ENCODE measurements at regions of chr5 and their contacts with region 1.

Region 1: GRCh38 chr5:175873088-175873454 is 1.7 kb downstream of the CPLX2 start:
- DNase-seq: peak; percentile 50
- H3K4me3 Mint-ChIP-seq: no peak overlapping the region
- H3K27ac Mint-ChIP-seq: no peak overlapping the region
- H3K4me1 Mint-ChIP-seq: peaks cover 9% of the 10 kb centered on the region
- H3K27me3 Mint-ChIP-seq: peaks cover 46% of the 10 kb centered on the region

Region 2: GRCh38 chr5:175464074-175464941 is 408.8 kb before region 1 on chr5:
- CTCF ChIA-PET with region 1: no interaction called
- POLR2A ChIA-PET with region 1: no interaction called
- intact Hi-C with region 1: no loop called
- DNase-seq: peak; percentile 84
- H3K4me3 Mint-ChIP-seq: no peak overlapping the region
- H3K27ac Mint-ChIP-seq: no peak overlapping the region
- H3K4me1 Mint-ChIP-seq: peaks cover 14% of the 10 kb centered on the region
- H3K27me3 Mint-ChIP-seq: no peaks in the 10 kb centered on the region

Region 3: DNA sequence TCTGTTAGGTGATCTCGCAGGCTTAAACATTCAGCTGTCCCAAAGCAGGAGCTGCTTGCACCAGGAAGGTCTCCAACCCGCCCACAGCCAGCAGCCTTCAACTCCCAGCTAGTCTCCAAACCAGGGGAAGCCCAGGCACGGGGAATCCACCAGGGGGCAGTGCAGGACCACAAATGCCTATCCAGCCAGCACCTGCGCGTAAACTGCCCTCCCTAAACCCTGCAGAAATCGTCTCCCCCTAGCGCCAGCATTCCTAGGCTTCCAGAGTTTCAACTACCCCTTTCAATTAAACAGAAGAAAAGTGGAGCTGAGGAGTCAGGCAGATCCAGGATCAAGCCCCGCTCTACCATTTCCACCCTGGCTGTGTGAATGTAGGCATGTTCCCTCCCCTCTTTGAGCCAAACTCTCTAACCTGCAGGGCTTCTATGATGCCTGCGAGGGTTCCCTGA is 143.2 kb before region 1 on chr5:
- CTCF ChIA-PET with region 1: interaction called, 17 read pairs
- POLR2A ChIA-PET with region 1: no interaction called
- intact Hi-C with region 1: loop called (anchors 2 kb)
- DNase-seq: peak; percentile 94
- H3K4me3 Mint-ChIP-seq: no peak overlapping the region
- H3K27ac Mint-ChIP-seq: no peak overlapping the region
- H3K4me1 Mint-ChIP-seq: peaks cover 7% of the 10 kb centered on the region
- H3K27me3 Mint-ChIP-seq: peaks cover 20% of the 10 kb centered on the region

Region 4: GRCh38 chr5:175751369-175751768 is 121.7 kb before region 1 on chr5:
- CTCF ChIA-PET with region 1: no interaction called
- POLR2A ChIA-PET with region 1: no interaction called
- intact Hi-C with region 1: no loop called
- DNase-seq: no peak
- H3K4me3 Mint-ChIP-seq: no peak overlapping the region
- H3K27ac Mint-ChIP-seq: no peak overlapping the region
- H3K4me1 Mint-ChIP-seq: no peaks in the 10 kb centered on the region
- H3K27me3 Mint-ChIP-seq: peaks cover 46% of the 10 kb centered on the region

Region 5: DNA sequence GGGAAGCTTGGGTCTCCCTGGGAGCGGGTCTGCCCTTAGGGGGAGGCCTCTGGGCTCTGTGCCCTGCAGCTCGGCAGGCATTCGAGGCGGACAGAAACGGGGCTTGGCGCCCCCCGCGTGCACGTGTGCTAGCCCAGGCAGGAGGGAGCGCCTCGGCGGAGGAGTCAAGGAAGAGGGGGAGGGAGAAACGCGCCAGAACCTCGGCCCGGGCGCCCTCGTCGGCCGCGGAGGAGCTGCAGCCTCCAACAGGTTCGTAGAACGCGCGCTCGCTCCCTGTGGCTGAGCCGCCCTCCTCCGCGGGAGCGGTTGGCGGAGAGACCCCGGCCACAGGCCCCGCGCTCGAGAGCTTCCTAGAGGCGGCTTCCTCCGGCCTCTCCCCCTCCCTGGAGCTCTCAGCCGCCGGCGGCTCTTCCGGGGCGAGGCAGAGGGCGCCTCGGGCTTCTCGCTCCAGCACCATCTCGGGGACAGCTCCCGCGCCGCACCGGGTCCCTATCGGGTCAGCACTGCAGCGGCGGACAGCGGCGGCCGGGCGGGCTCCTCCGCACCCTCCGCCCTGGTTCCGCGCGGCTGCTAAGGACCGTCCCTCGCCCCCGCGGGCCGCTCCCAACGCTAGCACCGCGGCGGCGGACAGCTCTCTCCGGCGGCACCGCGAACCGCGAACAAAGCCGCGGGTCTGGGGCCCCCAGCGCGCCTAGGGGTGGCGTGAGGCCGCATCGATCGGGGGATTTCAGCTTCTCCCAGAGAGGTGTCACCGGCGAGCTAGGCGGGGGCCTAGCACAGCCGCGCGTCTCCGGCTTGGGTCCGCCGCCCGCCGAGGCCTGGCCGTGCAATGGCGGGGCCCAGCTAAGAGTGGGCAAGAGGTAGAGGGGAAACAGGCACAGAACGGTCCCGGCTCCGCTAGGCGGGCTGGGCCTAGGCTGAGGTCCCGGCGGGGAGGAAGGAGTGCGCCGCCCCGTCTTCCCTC is 76.3 kb before region 1 on chr5:
- CTCF ChIA-PET with region 1: interaction called, 5 read pairs
- POLR2A ChIA-PET with region 1: no interaction called
- intact Hi-C with region 1: loop called (anchors 2 kb)
- DNase-seq: peak; percentile 90
- H3K4me3 Mint-ChIP-seq: no peak overlapping the region
- H3K27ac Mint-ChIP-seq: no peak overlapping the region
- H3K4me1 Mint-ChIP-seq: peaks cover 10% of the 10 kb centered on the region
- H3K27me3 Mint-ChIP-seq: peaks cover 65% of the 10 kb centered on the region

Region 6: DNA sequence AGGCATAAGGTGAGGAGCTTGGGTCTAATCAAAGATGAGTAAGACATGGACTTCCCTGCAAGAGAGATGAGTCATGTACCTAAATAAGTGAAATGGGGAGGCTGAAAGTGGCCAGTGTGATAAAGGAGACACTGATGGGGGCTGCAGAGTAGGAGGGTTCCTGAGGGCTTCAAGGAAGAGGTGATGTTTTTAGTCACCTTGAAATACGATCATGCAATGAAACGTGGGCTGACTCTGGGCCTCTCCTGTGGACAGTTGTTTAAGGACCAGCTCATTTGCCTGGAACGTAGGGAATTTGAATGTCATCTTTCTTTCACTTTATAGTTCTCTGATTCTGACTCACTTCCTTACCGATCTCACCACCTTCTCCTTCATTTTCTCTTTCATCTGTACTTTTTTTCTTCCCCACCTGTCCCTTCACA is 51.3 kb before region 1 on chr5:
- CTCF ChIA-PET with region 1: interaction called, 3 read pairs
- POLR2A ChIA-PET with region 1: no interaction called
- intact Hi-C with region 1: loop called (anchors 1 kb)
- DNase-seq: peak; percentile 57
- H3K4me3 Mint-ChIP-seq: peak overlapping the region; percentile 42
- H3K27ac Mint-ChIP-seq: peak overlapping the region; percentile 88
- H3K4me1 Mint-ChIP-seq: peaks cover 21% of the 10 kb centered on the region
- H3K27me3 Mint-ChIP-seq: peaks cover 19% of the 10 kb centered on the region

Region 7: DNA sequence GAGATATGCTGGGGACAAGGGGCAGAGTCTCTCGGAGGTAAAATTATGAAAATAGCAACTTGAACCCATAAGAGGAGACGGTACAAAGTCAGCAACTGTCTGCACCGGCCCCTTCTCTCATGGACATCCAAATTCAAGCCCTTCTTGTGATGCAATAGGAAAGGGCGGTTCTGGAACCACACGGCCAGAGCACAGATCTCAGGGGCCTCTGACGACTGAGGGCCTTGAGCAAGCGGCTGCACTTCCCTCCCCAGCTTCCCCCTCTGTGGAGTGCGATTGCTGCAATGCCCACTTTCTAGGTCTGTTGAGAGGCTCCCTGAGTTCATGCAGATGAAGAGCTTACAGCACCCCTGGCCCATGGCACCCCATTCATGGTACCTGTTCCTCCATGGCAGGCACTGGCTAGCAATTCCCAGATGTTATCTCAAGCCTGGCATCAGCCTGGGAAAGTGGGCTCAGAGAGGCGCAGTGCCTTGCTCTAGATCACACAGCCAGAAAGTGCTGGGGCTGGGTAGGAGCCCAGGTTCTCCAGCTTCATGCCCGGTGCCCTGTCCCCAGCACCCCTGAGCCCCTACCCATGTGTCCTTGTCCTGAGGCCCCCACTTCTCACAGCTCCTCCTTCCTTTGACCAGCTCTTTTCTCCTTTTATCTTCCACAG is 19.4 kb before region 1 on chr5:
- CTCF ChIA-PET with region 1: no interaction called
- POLR2A ChIA-PET with region 1: no interaction called
- intact Hi-C with region 1: no loop called
- DNase-seq: no peak
- H3K4me3 Mint-ChIP-seq: no peak overlapping the region
- H3K27ac Mint-ChIP-seq: no peak overlapping the region
- H3K4me1 Mint-ChIP-seq: no peaks in the 10 kb centered on the region
- H3K27me3 Mint-ChIP-seq: peaks cover 2% of the 10 kb centered on the region

Measured in activated CD4-positive, alpha-beta memory T cell treated with anti-CD3 and anti-CD28 coated beads for 36 hours (primary cell).